Pancreas (tissue), 10 donors: ENCODE measurements at regions of chr2 and their contacts with region 1.

Region 1: DNA sequence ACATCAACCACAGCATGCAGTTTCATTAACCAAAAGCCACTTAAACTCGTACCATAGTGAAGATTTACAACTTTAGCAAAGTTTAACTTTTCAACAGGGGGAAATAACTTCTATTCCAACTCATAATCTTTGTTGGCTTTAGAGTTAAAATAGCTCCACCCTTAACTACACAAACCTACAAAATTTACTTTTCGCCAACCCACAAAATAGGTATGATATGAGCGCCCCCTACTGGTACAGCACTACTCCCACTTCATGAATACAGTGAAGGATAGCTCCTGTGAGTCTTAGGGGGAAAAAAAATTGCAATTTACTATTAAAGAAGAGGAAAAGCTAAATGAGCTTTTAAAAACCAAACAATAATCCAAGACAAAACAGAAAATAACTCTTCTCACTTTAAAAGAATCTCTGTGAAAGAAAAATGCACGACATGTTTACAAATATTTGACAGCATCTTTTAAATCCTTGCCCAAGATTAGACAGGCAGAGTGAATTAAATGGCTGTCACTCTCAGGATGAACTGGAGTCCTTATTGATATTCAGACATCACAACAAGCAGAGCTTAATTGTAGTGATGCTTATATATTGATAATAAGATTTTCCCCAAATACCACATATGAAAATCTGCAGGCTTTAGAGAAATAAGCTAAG is 32.2 kb downstream of the TMEFF2 start:
- DNase-seq: peak in 5 of 6 donors; percentile 28 to 69 (median 38)
- ATAC-seq: peak in 3 of 4 donors; percentile 87 to 94 (median 92)
- H3K4me3 ChIP-seq: no peak overlapping the region
- H3K27ac ChIP-seq: no peak overlapping the region
- H3K4me1 ChIP-seq: peaks cover 0 to 8% (median 0%) of the 10 kb centered on the region in 3 donors
- H3K27me3 ChIP-seq: no peaks in the 10 kb centered on the region
- CTCF ChIP-seq: peak; percentile 70 to 96 (median 85)

Region 2: DNA sequence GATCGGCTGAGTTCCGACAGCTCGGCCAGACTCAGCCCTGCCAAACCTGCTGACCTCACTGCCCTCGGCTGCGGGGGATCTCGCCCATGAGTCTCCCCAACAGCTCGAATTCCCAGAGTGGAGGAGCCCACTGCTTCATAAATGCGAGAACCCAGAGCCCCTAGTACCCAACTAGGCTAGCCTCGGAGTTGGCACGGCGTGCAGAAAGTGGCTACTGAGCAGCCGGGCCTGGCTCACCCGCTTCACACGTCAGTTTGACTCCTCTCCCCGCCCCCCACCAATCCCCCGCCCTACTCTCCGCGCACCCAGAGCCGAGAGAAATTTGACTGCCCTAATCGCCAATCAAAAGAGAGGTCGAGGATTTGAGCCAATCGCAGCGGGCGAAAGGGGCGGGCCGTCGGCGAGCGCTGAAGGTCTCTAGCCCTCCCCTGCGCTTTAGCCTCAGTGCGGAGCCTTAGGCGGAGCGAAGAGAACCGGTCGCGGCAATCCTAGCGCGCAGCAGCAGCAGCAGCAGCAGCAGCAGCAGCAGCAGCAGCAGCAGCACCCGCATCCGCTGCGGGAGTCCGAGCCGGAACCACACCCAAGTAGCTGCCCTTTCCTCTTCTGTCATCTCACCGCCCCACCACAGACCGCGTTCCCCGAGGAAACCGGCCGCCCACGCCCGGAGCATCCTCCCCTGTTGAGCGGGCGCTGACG is 1282.0 kb before region 1 on chr2 and contains the start of gene GLS:
- intact Hi-C with region 1: no loop called
- DNase-seq: peak; percentile 96 to 97 (median 97)
- ATAC-seq: peak; percentile 85 to 90 (median 88)
- H3K4me3 ChIP-seq: peak within 1 kb of the TSS; percentile 93 to 98 (median 93)
- H3K27ac ChIP-seq: peak within 1 kb of the TSS; percentile 93 to 99 (median 98)
- H3K4me1 ChIP-seq: peaks cover 14 to 25% (median 16%) of the 10 kb centered on the region in 3 donors
- H3K27me3 ChIP-seq: no peaks in the 10 kb centered on the region
- CTCF ChIP-seq: no peak
- total RNA-seq, gene GLS: 30.4 to 84.4 (median 51.6) TPM

Region 3: GRCh38 chr2:191555092-191555742 is 607.3 kb before region 1 on chr2:
- intact Hi-C with region 1: loop called in 2 of 3 experiments (anchors 10 kb)
- DNase-seq: peak; percentile 72 to 86 (median 78)
- ATAC-seq: peak; percentile 92 to 100 (median 98)
- H3K4me3 ChIP-seq: no peak overlapping the region
- H3K27ac ChIP-seq: no peak overlapping the region
- H3K4me1 ChIP-seq: no peaks in the 10 kb centered on the region
- H3K27me3 ChIP-seq: peaks cover 0 to 4% (median 0%) of the 10 kb centered on the region in 4 donors
- CTCF ChIP-seq: peak; percentile 40 to 67 (median 50)

Region 4: DNA sequence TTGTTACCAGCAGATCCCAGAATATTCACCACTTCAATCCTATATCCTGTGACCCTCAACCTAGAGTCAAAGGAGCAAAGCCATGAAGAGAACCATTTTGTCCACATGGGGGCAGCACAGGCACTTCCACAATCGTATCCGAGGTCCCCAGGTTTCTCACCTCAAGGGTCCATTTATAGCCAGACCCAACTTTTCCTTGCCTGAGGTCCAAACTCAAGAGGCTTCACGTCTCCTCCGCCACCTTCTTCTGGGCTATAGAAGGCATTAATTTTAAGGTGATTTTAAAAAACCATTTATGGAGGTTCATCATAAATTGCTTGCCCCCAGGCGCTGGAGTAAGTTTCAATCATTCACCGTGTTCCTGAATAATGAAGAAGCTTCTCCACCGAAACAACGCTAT is 596.2 kb before region 1 on chr2:
- intact Hi-C with region 1: loop called in 1 of 3 experiments (anchors 10 kb)
- DNase-seq: peak in 5 of 6 donors; percentile 21 to 70 (median 54)
- ATAC-seq: peak; percentile 68 to 94 (median 87)
- H3K4me3 ChIP-seq: no peak overlapping the region
- H3K27ac ChIP-seq: no peak overlapping the region
- H3K4me1 ChIP-seq: peaks cover 0 to 2% (median 0%) of the 10 kb centered on the region in 3 donors
- H3K27me3 ChIP-seq: no peaks in the 10 kb centered on the region
- CTCF ChIP-seq: peak; percentile 55 to 72 (median 66)

Region 5: GRCh38 chr2:191811807-191812602 is 350.5 kb before region 1 on chr2:
- intact Hi-C with region 1: loop called in 2 of 3 experiments (anchors 5 kb)
- DNase-seq: peak in 3 of 6 donors; percentile 5 to 63 (median 12)
- ATAC-seq: peak; percentile 56 to 91 (median 88)
- H3K4me3 ChIP-seq: no peak overlapping the region
- H3K27ac ChIP-seq: no peak overlapping the region
- H3K4me1 ChIP-seq: no peaks in the 10 kb centered on the region
- H3K27me3 ChIP-seq: no peaks in the 10 kb centered on the region
- CTCF ChIP-seq: peak; percentile 11 to 55 (median 46)

Region 6: DNA sequence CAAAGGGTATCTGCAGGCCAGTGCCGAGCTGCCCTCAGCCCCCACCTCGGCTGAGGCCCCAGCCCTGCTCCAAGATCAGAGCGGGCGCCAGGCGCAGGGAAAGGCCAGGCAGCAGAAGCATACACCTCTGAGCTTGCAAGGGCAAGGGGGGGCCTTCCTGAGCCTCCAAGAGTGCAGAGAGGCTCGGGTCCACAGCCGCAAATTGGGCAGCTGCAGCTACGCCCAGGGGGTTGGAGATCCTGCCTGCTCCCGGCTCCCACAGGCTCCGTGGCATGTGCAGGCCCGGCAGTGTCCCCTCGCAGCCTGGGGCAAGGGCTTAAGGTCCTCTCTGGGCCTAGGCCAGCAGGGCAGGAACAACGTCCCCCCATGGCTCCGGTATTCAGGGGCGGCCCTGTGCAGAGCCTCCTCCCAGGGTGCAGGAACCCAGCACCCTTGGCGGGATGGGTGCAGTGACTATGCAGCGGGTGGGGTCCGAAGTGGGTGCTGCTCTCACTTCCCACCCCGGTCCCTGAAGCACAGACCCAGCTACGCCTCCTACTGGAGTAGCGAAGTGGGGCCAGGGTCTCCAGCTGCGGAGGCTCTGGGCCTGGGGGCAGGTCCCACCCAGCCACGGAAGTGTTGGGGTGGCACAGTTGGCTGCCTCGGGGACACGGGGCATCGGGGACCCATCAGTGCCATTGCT is 152.4 kb after region 1 on chr2:
- intact Hi-C with region 1: no loop called
- DNase-seq: peak in 3 of 6 donors; percentile 15 to 65 (median 45)
- ATAC-seq: no peak
- H3K4me3 ChIP-seq: no peak overlapping the region
- H3K27ac ChIP-seq: no peak overlapping the region
- H3K4me1 ChIP-seq: no peaks in the 10 kb centered on the region
- H3K27me3 ChIP-seq: no peaks in the 10 kb centered on the region
- CTCF ChIP-seq: no peak